OCI-LY7 (cell line): ENCODE measurements at regions of chr5 and their contacts with region 1.

Region 1: GRCh38 chr5:6632917-6633468 is at the starts of genes NSUN2 and SRD5A1:
- DNase-seq: peak; percentile 94
- H3K4me3 ChIP-seq: peak within 1 kb of the TSS; percentile 97
- H3K27ac ChIP-seq: peak within 1 kb of the TSS; percentile 43
- H3K4me1 ChIP-seq: peaks cover 19% of the 10 kb centered on the region
- CTCF ChIP-seq: no peak
- total RNA-seq, gene NSUN2: 88.1 and 88.9 TPM in 2 replicates
- total RNA-seq, gene SRD5A1: 16.7 and 31.6 TPM in 2 replicates

Region 2: DNA sequence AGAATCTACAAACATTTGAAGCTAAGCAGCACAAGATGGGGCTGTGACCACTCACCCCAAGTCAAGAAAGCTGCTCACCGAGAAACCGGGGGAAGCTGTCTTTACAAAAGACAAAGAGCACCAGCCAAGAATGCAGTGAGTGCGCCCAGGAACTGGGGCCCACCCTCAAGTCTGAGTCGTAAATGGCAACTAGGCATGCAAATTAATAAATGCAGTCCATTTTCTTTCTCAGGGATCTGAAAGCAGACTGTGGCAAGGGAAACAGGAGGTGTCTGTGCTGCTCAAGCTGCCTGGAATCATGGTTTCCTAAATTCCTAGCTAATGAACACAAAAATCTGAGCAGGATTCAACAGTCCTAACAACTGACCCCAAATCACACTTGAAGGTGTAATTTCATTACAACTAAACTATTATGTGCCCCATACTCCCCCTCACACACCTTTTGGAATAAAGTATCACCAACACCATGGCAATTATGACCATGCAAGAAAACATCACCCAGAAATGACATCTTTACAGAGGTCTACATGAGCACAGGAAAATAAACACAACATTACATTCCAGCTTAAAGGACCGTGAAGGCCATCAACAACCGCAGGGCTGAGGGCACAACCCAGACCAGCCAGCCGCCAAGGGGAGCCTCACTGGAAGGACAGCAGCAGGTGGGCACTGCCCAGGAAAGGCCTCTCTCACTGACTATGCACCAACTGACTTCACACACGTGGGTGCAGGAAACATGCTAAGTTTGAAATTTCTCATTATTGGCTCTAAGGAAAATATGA is 17.8 kb before region 1 on chr5:
- CTCF ChIA-PET with region 1: no interaction called
- POLR2A ChIA-PET with region 1: interaction called, 13 read pairs
- intact Hi-C with region 1: no loop called
- DNase-seq: no peak
- H3K4me3 ChIP-seq: no peak overlapping the region
- H3K27ac ChIP-seq: no peak overlapping the region
- H3K4me1 ChIP-seq: no peaks in the 10 kb centered on the region
- CTCF ChIP-seq: no peak

Region 3: GRCh38 chr5:6659941-6660684 is 27.1 kb after region 1 on chr5:
- CTCF ChIA-PET with region 1: no interaction called
- POLR2A ChIA-PET with region 1: interaction called, 3 read pairs
- intact Hi-C with region 1: loop called (anchors 2 kb)
- DNase-seq: peak; percentile 88
- H3K4me3 ChIP-seq: peak overlapping the region; percentile 61
- H3K27ac ChIP-seq: peak overlapping the region; percentile 92
- H3K4me1 ChIP-seq: peaks cover 32% of the 10 kb centered on the region
- CTCF ChIP-seq: no peak

Region 4: DNA sequence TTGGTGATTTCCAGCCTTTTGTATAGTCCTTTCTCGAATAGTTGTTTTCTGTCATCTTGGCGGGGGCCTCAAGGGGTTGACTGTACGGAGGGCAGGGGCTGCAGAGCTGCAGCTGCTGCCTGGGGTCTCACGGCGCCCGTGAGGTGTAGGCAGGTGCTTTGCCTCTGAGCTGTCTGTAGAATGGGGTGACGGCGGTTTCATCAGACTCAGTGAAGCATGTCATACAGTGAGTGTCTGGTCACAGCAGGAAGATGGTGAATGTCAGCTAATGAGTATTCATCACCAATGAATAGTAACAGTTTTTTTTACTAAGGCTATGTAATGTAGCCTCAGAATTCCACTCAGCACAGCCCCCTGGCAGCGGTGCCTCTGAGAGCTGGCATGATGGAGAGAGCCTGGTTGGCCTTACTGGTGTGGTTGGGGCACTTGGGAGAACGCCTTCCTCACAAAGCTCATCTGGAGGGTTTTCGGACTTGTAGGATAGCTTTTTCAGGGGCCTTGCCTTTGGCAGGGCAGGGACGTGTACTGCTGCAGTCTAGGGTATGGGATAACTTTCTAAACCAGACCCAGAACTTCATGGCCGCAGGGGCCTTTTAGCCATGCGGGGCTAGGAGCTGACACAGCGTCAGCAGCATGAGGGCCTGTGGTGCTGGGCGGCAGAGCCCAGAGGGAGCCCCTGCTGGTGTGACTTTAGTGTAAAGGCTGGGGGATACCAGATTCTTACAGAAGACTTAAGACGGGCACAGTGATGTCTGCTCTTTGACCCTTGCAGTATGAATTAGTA is 95.2 kb after region 1 on chr5:
- CTCF ChIA-PET with region 1: interaction called, 7 read pairs
- POLR2A ChIA-PET with region 1: interaction called, 14 read pairs
- intact Hi-C with region 1: no loop called
- DNase-seq: peak; percentile 84
- H3K4me3 ChIP-seq: peak overlapping the region; percentile 55
- H3K27ac ChIP-seq: peak overlapping the region; percentile 86
- H3K4me1 ChIP-seq: peaks cover 54% of the 10 kb centered on the region
- CTCF ChIP-seq: peak; percentile 64